ENCODE measurements at regions of chr1 and their contacts with region 1.

Region 1: DNA sequence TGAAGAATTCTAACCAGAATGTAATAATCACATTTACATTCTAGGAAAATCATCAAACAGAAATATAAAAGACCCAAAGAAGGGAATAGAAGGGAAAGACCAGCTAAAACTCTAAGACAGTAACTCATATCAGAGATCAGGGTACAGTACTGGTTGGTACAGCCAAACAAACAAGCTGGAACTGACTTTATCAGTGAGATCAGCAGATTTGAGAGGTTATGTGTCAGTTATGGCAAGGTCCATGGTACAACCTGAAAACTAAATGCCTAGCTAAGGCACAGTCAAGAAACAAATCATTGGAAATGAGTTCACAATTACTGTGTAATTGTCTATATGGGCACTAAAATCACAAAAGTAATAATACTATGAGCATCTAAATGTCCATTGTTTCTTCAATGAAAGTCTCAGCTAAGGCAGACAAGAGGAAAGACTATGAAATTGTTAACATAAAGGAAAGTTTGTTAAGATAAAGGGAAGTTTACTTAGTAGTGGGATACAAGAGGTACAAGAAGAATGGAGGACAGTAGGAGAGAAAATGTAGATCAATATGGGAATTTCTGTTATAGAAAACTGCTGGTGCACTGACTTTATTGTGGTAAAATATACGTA is 75.8 kb downstream of the TRIM33 start:
- DNase-seq: no peak
- ATAC-seq: peak; percentile 28; the same call in 1 of the 3 replicates
- H3K4me3 ChIP-seq: no peak overlapping the region
- H3K27ac ChIP-seq: no peak overlapping the region
- H3K4me1 ChIP-seq: no peaks in the 10 kb centered on the region
- H3K27me3 ChIP-seq: no peaks in the 10 kb centered on the region
- CTCF ChIP-seq: no peak
- EP300 ChIP-seq: no peak
- POLR2A ChIP-seq: no peak
- RAD21 ChIP-seq: no peak

Region 2: DNA sequence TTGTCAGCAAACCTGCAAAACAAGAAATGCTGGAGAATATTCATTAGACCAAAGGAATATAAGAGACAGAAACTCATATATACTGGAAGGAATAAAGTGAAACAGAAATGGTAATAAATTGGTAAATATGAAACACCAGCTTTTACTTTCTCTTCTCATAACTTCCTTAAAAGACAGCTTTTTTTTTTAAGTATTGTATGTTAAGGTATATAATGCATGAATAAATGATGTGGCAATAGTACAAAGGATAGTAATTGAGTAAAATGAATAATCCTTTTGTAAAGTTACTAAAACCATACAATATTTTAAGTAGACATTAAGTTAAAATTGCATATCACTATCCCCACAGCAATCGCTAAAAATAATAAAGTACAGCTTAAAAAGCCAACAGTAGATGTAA is 11.0 kb after region 1 on chr1:
- CTCF ChIA-PET with region 1: no interaction called
- POLR2A ChIA-PET with region 1: interaction called, 12 read pairs
- in situ Hi-C with region 1: no loop called
- intact Hi-C with region 1: no loop called
- DNase-seq: no peak
- ATAC-seq: no peak
- H3K4me3 ChIP-seq: no peak overlapping the region
- H3K27ac ChIP-seq: no peak overlapping the region
- H3K4me1 ChIP-seq: no peaks in the 10 kb centered on the region
- H3K27me3 ChIP-seq: no peaks in the 10 kb centered on the region
- CTCF ChIP-seq: no peak
- EP300 ChIP-seq: no peak
- POLR2A ChIP-seq: no peak
- RAD21 ChIP-seq: no peak